ENCODE measurements at regions of chrX and their contacts with region 1.

Region 1: DNA sequence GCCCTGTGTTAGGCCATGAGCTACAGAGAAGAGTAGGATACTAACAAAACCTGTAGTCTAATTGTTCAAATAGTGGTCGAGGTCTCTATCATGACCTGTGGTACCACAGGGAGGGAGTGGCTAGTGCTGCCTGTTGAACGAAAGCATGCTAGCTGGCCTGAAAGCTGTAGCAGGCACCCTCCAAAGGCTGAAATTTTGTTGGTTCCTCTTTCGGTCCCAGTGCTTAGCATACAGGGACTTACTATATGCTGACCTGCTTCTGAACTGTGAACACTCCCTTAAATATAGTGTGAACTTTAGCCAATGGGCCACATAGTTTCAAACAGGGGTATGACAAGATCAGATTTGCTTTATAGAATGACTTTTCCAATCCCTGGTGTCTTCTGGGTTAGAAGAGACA is 113.4 kb downstream of the PJA1 start:
- DNase-seq: no peak
- ATAC-seq: peak; percentile 27; the same call in 1 of the 3 replicates
- H3K4me3 ChIP-seq: no peak overlapping the region
- H3K27ac ChIP-seq: no peak overlapping the region
- H3K4me1 ChIP-seq: no peaks in the 10 kb centered on the region
- H3K27me3 ChIP-seq: 0 out of 4 replicates have a peak, but pooled peaks cover 0 to 2% of the 10 kb centered on the region in 2 experiments
- CTCF ChIP-seq: no peak
- EP300 ChIP-seq: no peak
- POLR2A ChIP-seq: no peak
- RAD21 ChIP-seq: no peak

Region 2: GRCh38 chrX:68997911-68998310 is 54.0 kb before region 1 on chrX:
- CTCF ChIA-PET with region 1: no interaction called
- POLR2A ChIA-PET with region 1: no interaction called
- RAD21 ChIA-PET with region 1: no interaction called
- SMC1A ChIA-PET with region 1: no interaction called
- in situ Hi-C with region 1: no loop called
- intact Hi-C with region 1: no loop called
- DNase-seq: no peak
- ATAC-seq: no peak
- H3K4me3 ChIP-seq: no peak overlapping the region
- H3K27ac ChIP-seq: no peak overlapping the region
- H3K4me1 ChIP-seq: no peaks in the 10 kb centered on the region
- H3K27me3 ChIP-seq: peaks cover 0 to 3% of the 10 kb centered on the region in 2 experiments; a peak in 3 of 4 replicates
- CTCF ChIP-seq: no peak
- EP300 ChIP-seq: no peak
- POLR2A ChIP-seq: no peak
- RAD21 ChIP-seq: no peak

Region 3: GRCh38 chrX:69065451-69065850 is 13.6 kb after region 1 on chrX:
- CTCF ChIA-PET with region 1: no interaction called
- POLR2A ChIA-PET with region 1: no interaction called
- RAD21 ChIA-PET with region 1: no interaction called
- SMC1A ChIA-PET with region 1: no interaction called
- in situ Hi-C with region 1: no loop called
- intact Hi-C with region 1: no loop called
- DNase-seq: no peak
- ATAC-seq: no peak
- H3K4me3 ChIP-seq: no peak overlapping the region
- H3K27ac ChIP-seq: no peak overlapping the region
- H3K4me1 ChIP-seq: no peaks in the 10 kb centered on the region
- H3K27me3 ChIP-seq: peaks cover 0 to 2% of the 10 kb centered on the region in 2 experiments; a peak in 2 of 4 replicates
- CTCF ChIP-seq: no peak
- EP300 ChIP-seq: no peak
- POLR2A ChIP-seq: no peak
- RAD21 ChIP-seq: no peak

Region 4: DNA sequence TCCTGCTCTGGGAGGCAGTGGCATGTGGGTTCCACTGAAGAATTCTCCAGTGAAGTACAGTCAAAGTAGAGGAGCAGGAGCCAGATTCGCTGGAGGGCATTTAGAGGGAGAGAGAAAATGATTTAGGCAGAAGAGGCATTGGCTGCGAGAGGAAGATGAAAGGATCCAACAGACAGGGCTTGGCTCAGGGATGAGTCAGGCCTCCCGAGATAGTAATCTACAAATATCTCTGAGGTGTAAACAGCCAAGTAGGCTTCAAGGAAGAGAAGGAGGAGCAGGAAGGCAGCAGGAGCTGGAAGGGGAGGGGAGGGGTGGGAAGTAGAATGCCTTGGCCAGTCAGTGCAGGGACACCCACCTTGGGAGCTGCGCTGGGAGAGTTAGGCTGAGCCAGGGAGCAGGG is 57.8 kb after region 1 on chrX:
- CTCF ChIA-PET with region 1: no interaction called
- POLR2A ChIA-PET with region 1: no interaction called
- RAD21 ChIA-PET with region 1: no interaction called
- SMC1A ChIA-PET with region 1: no interaction called
- in situ Hi-C with region 1: no loop called
- intact Hi-C with region 1: loop called (anchors 10 kb)
- DNase-seq: no peak
- ATAC-seq: no peak
- H3K4me3 ChIP-seq: no peak overlapping the region
- H3K27ac ChIP-seq: no peak overlapping the region
- H3K4me1 ChIP-seq: no peaks in the 10 kb centered on the region
- H3K27me3 ChIP-seq: no peaks in the 10 kb centered on the region; a peak in 1 of 4 replicates
- CTCF ChIP-seq: no peak
- EP300 ChIP-seq: no peak
- POLR2A ChIP-seq: no peak
- RAD21 ChIP-seq: no peak